Lower leg skin (tissue), 4 donors: ENCODE measurements at regions of chr5 and their contacts with region 1.

Region 1: DNA sequence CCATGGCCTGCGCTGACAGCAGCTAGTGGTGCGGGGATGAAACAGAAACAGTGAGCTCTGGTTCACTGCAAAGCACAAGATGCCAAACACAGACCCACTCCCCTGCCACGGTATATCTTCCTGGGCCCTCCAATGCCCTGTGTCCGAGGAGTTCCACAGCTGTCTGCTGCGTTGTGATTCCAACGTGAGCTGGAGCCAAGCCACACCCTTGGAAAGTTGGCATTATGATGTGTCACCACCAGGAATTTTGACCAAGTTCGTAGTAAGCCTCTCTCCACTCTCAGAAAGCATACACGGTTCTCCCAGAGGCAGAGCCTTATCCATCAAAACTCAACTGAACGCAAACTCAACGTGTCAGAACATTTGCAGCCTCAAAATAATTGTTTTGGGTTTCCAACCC is 55.6 kb downstream of the MACROH2A1 start:
- DNase-seq: peak in 1 of 2 donors; percentile 28
- H3K4me3 ChIP-seq: no peak overlapping the region
- CTCF ChIP-seq: no peak
- POLR2A ChIP-seq: no peak

Region 2: GRCh38 chr5:136992796-136993489 is 1649.5 kb after region 1 on chr5:
- intact Hi-C with region 1: loop called (anchors 10 kb)
- DNase-seq: no peak
- H3K4me3 ChIP-seq: no peak overlapping the region
- CTCF ChIP-seq: no peak
- POLR2A ChIP-seq: no peak